ENCODE measurements at regions of chr5 and their contacts with region 1.

Region 1: GRCh38 chr5:142611154-142611553 is 74.7 kb downstream of the FGF1 start:
- DNase-seq: peak; percentile 82

Region 2: GRCh38 chr5:142699184-142699720 is 88.1 kb after region 1 on chr5:
- intact Hi-C with region 1: loop called in 1 of 2 experiments (anchors 5 kb)
- DNase-seq: peak; percentile 95

Region 3: DNA sequence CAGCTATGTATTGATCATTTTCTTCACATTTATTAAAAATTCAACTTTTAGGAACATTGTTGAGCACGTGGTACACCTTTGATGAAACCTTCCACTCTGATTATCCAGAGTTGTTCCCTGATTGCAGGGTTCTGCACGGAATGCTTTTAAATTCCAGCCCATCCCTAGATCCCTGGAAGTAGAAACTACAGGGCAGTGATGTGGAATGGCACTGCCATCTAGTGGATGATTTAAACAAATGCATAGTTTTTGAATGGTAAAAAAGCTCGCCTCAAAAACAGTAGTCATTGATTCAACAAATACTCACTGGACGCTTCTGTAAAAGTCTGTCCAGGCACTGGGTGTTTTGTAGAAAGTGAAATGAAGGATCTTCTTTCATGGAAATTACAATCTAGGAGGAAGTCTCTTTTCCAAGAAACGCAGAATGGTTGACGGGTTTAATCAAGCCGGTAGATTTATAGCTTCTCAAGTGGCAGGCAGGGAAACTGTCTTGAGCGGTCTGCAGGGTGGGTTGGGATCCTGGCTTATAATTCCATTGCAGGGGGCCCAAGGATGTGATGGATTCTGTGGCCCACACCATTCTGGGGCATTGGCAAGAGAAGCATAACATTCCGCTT is 277.4 kb after region 1 on chr5:
- intact Hi-C with region 1: loop called in 1 of 2 experiments (anchors 5 kb)
- DNase-seq: no peak